ENCODE measurements at regions of chr14 and their contacts with region 1.

Region 1: DNA sequence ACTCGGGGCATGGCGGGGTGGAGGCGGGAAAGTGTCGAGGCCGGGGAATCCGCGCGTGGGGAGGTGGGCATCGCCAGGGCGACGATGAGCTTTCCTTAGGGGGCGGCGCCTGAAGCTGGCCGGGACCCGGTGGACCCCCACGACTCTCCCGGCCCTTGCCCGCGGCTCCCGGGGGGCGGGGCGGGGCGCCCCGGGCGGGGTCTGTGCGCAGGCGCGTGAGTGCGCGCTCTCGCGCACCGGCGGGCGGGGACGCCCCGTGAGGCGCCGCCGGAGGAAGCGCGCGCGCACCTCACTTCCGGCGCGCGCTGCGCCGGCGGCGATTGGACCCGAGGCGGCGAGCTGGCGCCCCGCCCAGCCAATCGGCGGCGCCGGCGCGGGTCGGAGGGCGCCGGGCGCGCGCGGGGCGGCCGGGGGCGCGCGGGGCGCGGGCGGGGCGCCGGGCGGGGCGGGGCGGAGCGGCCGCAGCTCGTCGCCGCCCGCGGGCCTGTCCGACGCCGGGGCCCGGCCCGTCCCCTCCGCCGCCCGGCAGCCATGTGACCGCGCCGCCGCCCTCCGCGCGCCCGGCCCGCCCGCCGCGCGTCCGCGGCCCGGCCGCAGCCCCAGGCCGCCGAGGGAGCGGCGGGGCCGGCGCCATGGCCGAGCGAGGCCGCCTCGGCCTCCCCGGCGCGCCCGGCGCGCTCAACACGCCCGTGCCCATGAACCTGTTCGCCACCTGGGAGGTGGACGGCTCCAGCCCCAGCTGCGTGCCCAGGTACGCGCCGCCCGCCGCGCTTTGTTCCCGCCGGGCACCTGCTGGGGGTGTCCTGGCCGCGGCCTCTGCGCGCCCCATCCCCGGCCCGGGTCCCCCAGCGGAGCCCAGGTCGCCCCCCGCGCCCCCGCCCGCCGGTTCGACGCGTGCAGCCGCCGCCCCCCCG is at the start of gene PACS2:
- DNase-seq: peak; percentile 83 to 91 (median 89)
- H3K4me3 ChIP-seq: peak within 1 kb of the TSS; percentile 56 to 78 (median 74)
- H3K27ac ChIP-seq: peak within 1 kb of the TSS in 1 of 2 experiments; percentile 51
- H3K4me1 ChIP-seq: peaks cover 1 to 45% (median 38%) of the 10 kb centered on the region in 4 experiments
- H3K27me3 ChIP-seq: no peaks in the 10 kb centered on the region

Region 2: GRCh38 chr14:105168979-105169507 is 145.5 kb before region 1 on chr14:
- CTCF ChIA-PET with region 1: no interaction called
- POLR2A ChIA-PET with region 1: no interaction called
- DNase-seq: peak; percentile 27 to 46 (median 36)
- H3K4me3 ChIP-seq: peak overlapping the region in 3 of 7 experiments; percentile 15 to 52 (median 50)
- H3K27ac ChIP-seq: no peak overlapping the region
- H3K4me1 ChIP-seq: peaks cover 0 to 44% (median 36%) of the 10 kb centered on the region in 4 experiments
- H3K27me3 ChIP-seq: peaks cover 0 to 56% (median 31%) of the 10 kb centered on the region in 5 experiments

Region 3: DNA sequence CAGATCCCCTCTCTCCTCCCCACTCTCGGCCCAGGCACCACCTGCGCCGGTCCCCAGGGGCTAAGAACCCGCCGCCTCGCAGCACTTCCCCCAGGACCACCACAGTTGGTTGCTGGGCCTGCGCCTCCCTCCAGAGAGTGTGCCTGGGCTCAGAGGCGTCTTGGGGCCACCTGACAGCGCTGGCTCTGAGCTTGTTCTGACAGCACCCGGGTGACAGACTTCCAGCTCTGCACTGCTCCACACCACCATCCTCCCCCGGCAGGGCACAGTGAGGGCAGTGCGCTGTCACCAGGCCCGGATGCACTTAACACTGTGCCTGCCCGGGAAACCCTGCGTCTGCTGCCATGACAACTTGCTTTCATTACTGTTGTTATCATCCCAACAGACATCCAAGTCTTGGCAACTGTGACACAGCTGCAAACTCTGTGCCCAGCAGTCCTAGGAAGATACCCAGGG is 20.4 kb before region 1 on chr14:
- CTCF ChIA-PET with region 1: interaction called, 13 read pairs
- POLR2A ChIA-PET with region 1: interaction called, 22 read pairs
- DNase-seq: peak; percentile 81 to 96 (median 95)
- H3K4me3 ChIP-seq: peak overlapping the region in 4 of 7 experiments; percentile 1 to 66 (median 52)
- H3K27ac ChIP-seq: peak overlapping the region; percentile 95 to 96
- H3K4me1 ChIP-seq: peaks cover 8 to 71% (median 60%) of the 10 kb centered on the region in 4 experiments
- H3K27me3 ChIP-seq: no peaks in the 10 kb centered on the region

Region 4: DNA sequence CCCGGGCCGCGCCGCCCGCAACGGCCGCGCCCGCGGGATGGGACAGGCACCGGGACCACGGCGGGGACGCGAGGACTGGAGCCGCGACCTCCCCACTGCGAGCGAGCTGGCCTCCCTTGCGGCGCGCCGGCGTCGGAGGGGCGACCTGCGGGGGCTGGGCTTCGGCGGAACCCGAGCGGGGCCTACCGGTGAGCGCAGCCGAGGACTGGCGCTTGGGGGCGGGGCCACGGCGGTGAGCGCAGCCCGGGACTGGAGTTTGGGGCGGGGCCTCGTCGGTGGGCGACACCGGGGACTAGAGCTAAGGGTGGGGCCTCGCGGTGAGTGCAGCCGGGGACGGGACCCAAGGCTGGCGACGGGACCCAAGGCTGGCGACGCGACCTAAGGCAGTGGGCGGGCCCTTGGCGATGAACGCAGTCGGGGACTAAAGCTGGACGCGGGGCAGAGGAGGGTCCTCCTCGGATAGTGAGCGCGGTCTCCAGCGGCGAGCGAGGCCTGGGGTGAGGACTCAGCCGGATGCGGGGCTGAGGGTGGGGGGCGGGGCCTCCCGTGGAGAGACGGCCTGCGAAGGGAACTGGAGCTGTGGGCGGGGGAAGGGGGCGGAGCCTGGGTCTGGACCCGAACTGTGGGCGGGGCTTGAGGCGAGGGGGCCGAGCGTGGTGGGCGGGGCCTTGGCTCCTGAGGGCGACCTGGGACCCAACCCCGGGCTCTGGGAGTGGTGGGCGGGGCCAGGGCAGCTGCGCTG is 13.6 kb before region 1 on chr14 and contains the start of gene BRF1:
- CTCF ChIA-PET with region 1: interaction called, 14 read pairs
- POLR2A ChIA-PET with region 1: interaction called, 22 read pairs
- DNase-seq: peak; percentile 94 to 98 (median 97)
- H3K4me3 ChIP-seq: peak within 1 kb of the TSS; percentile 78 to 96 (median 86)
- H3K27ac ChIP-seq: peak within 1 kb of the TSS; percentile 78 to 89
- H3K4me1 ChIP-seq: peaks cover 5 to 31% (median 24%) of the 10 kb centered on the region in 4 experiments
- H3K27me3 ChIP-seq: no peaks in the 10 kb centered on the region

Region 5: GRCh38 chr14:105384041-105384737 is 69.6 kb after region 1 on chr14:
- CTCF ChIA-PET with region 1: no interaction called
- POLR2A ChIA-PET with region 1: no interaction called
- DNase-seq: no peak
- H3K4me3 ChIP-seq: no peak overlapping the region
- H3K27ac ChIP-seq: no peak overlapping the region
- H3K4me1 ChIP-seq: peaks cover 0 to 8% (median 6%) of the 10 kb centered on the region in 4 experiments
- H3K27me3 ChIP-seq: no peaks in the 10 kb centered on the region